Heart left ventricle (tissue), 16 donors: ENCODE measurements at regions of chr4 and their contacts with region 1.

Region 1: GRCh38 chr4:26787461-26788340 is 72.9 kb upstream of the STIM2 start:
- DNase-seq: peak; percentile 42 to 67 (median 53)
- ATAC-seq: peak; percentile 52 to 83 (median 75)
- H3K4me3 ChIP-seq: peak overlapping the region in 1 of 12 donors; percentile 11
- H3K27ac ChIP-seq: peak overlapping the region in 10 of 12 donors; percentile 25 to 66 (median 52)
- H3K4me1 ChIP-seq: peaks cover 0 to 28% (median 18%) of the 10 kb centered on the region in 12 donors
- H3K27me3 ChIP-seq: no peaks in the 10 kb centered on the region
- CTCF ChIP-seq: peak; percentile 32 to 63 (median 45)
- POLR2A ChIP-seq: no peak

Region 2: GRCh38 chr4:26992657-26993361 is 205.1 kb after region 1 on chr4:
- intact Hi-C with region 1: loop called in 1 of 10 experiments (anchors 10 kb)
- DNase-seq: peak in 4 of 5 donors; percentile 34 to 55 (median 40)
- ATAC-seq: peak; percentile 75 to 92 (median 89)
- H3K4me3 ChIP-seq: no peak overlapping the region
- H3K27ac ChIP-seq: peak overlapping the region in 9 of 12 donors; percentile 12 to 47 (median 32)
- H3K4me1 ChIP-seq: peaks cover 0 to 34% (median 24%) of the 10 kb centered on the region in 12 donors
- H3K27me3 ChIP-seq: no peaks in the 10 kb centered on the region
- CTCF ChIP-seq: no peak
- POLR2A ChIP-seq: no peak